A549 (cell line): ENCODE measurements at regions of chr5 and their contacts with region 1.

Region 1: GRCh38 chr5:57411982-57412381 is 70.6 kb downstream of the ACTBL2 start:
- DNase-seq: no peak
- ATAC-seq: no peak
- H3K4me3 ChIP-seq: no peak overlapping the region
- H3K27ac ChIP-seq: no peak overlapping the region
- H3K4me1 ChIP-seq: no peaks in the 10 kb centered on the region
- CTCF ChIP-seq: no peak
- EP300 ChIP-seq: no peak
- POLR2A ChIP-seq: no peak
- RAD21 ChIP-seq: no peak

Region 2: GRCh38 chr5:57422993-57423392 is 11.0 kb after region 1 on chr5:
- CTCF ChIA-PET with region 1: interaction called, 10 read pairs
- POLR2A ChIA-PET with region 1: no interaction called
- DNase-seq: no peak
- ATAC-seq: no peak
- H3K4me3 ChIP-seq: no peak overlapping the region
- H3K27ac ChIP-seq: no peak overlapping the region
- H3K4me1 ChIP-seq: no peaks in the 10 kb centered on the region
- CTCF ChIP-seq: no peak
- EP300 ChIP-seq: no peak
- POLR2A ChIP-seq: no peak
- RAD21 ChIP-seq: no peak